ENCODE measurements at regions of chr19 and their contacts with region 1.

Region 1: GRCh38 chr19:506404-507285 is 652 bp upstream of the TPGS1 start:
- DNase-seq: peak; percentile 95

Region 2: DNA sequence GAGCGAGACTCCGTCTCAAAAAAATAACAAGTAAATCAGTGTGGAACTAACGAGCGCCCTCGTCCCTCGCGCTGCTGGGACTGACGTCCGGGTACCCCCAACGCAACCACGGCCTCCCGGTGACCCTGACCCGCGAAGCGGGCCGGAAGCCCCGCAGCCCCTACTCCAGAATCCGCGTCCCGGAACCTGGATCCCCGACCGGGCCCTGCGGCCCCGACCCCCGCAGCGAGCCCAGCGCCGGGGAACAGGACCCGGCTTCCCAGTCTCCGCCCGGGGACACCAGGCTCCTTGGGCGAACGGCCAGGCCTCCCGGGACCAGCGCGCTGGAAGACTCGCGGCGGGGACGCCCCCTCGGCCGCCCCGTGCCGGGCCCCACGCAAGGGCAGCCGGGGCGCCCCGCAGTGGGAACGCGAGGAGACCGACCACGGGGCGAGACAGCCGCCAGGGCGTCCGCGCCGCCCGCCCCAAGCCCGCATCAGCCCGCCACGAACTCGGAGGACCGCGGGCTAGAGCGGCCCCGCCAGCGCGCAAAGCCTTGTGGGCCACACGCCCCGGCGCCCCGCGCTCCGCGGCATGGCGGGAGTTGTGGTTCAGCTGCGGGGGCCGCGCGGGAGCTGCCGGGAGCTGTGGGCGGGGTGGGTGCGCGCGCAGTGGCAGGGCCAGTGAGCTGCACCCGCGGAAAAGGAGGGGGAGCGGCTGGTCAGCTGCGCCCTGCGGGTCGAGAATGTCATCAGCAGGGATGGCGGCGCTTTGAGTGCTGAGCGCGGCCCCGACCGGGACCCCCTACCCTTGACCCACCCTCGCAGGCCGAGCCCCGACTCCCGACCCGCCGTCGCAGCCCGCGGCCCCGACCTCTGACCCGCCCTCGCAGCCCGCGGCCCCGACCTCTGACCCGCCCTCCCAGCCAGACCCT is 17.9 kb before region 1 on chr19:
- CTCF ChIA-PET with region 1: interaction called, 3 read pairs
- POLR2A ChIA-PET with region 1: interaction called, 20 read pairs
- DNase-seq: peak; percentile 91

Region 3: DNA sequence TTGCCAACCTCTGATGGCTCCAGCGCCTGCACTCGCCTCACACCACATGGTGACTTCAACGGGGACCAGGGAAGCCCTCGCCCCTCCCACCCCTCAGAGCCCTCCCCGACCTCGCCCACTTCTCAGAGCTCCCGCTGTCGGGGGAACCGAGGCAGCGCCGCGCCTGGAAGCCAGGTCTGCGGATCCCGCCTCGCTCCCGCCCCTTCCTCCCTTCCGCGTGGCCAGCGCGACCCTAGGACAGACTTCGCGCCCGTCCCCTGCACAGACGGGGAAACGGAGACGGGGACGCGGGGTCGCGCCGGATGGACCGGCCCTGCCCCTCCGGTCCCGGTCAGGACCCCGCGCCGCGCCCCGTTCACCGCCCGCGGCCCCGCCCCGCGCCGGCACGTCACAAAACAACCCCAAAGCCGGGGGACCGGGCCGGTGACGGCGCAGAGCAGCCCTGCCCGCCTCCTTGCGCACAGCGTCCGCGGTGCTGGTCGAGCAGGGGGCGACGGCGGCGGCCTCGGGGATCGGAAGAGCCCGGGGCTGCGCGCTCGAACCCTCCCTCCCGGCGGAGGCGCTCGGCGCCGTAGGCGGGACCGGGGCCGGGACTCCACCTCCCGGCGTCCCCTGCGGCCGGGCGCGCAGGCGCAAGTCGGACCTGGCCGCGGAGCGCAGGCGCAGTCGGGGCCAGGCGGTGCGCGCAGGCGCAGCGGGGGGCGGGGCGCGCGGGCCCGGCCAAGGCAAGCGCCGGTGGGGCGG is 24.5 kb after region 1 on chr19:
- CTCF ChIA-PET with region 1: interaction called, 26 read pairs
- POLR2A ChIA-PET with region 1: interaction called, 24 read pairs
- DNase-seq: peak; percentile 99

Region 4: GRCh38 chr19:543910-544608 is 37.4 kb after region 1 on chr19 and contains the start of gene GZMM:
- CTCF ChIA-PET with region 1: no interaction called
- POLR2A ChIA-PET with region 1: no interaction called
- DNase-seq: no peak

Measured in HEK293T (cell line).